ENCODE measurements at regions of chr15 and their contacts with region 1.

Region 1: GRCh38 chr15:75903331-75904239 is at the start of gene FBXO22:
- DNase-seq: peak; percentile 93 to 96 (median 96)
- ATAC-seq: peak; percentile 99
- H3K4me3 ChIP-seq: peak within 1 kb of the TSS; percentile 54
- H3K27ac ChIP-seq: peak within 1 kb of the TSS; percentile 32
- H3K4me1 ChIP-seq: no peaks in the 10 kb centered on the region
- H3K27me3 ChIP-seq: no peaks in the 10 kb centered on the region
- total RNA-seq, gene FBXO22: 18.8 to 22.8 (median 20.2) TPM

Region 2: GRCh38 chr15:75842722-75843551 is 60.6 kb before region 1 on chr15 and contains the start of gene UBE2Q2:
- intact Hi-C with region 1: loop called in 1 of 4 experiments (anchors 10 kb)
- DNase-seq: peak; percentile 86 to 94 (median 91)
- ATAC-seq: peak; percentile 74 to 80
- H3K4me3 ChIP-seq: peak within 1 kb of the TSS; percentile 93
- H3K27ac ChIP-seq: peak within 1 kb of the TSS; percentile 82
- H3K4me1 ChIP-seq: peaks cover 3% of the 10 kb centered on the region
- H3K27me3 ChIP-seq: no peaks in the 10 kb centered on the region
- total RNA-seq, gene UBE2Q2: 26.5 to 32.6 (median 27.4) TPM